ENCODE measurements at regions of chr3 and their contacts with region 1.

Region 1: GRCh38 chr3:27134165-27134796 is 234.9 kb downstream of the NEK10 start:
- H3K4me3 Mint-ChIP-seq: no peak overlapping the region
- H3K27ac Mint-ChIP-seq: no peak overlapping the region
- H3K4me1 Mint-ChIP-seq: no peaks in the 10 kb centered on the region
- H3K27me3 Mint-ChIP-seq: peaks cover 2% of the 10 kb centered on the region

Region 2: DNA sequence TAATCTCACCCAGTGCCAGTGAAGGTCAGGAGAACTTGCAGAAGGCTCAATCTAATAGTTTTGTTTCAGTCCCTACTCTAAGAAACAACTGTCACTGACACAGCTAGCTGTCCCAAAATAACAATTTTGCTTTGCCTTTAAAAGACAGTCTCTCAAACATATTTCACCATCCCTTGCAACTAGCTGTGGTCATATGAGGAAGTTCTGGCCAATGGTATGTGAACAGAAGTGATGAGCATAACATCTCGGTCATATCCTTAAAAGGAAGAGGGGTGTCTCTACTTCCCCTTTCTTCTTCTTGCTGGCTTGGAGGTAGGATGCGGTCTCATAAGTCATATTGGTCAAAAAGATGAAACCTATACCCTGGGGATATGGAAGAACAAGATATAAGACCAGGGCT is 36.8 kb after region 1 on chr3:
- intact Hi-C with region 1: no loop called
- H3K4me3 Mint-ChIP-seq: no peak overlapping the region
- H3K27ac Mint-ChIP-seq: no peak overlapping the region
- H3K4me1 Mint-ChIP-seq: peaks cover 11% of the 10 kb centered on the region
- H3K27me3 Mint-ChIP-seq: no peaks in the 10 kb centered on the region

Region 3: GRCh38 chr3:27467545-27467944 is 333.3 kb after region 1 on chr3:
- intact Hi-C with region 1: loop called (anchors 10 kb)
- H3K4me3 Mint-ChIP-seq: no peak overlapping the region
- H3K27ac Mint-ChIP-seq: no peak overlapping the region
- H3K4me1 Mint-ChIP-seq: peaks cover 10% of the 10 kb centered on the region
- H3K27me3 Mint-ChIP-seq: no peaks in the 10 kb centered on the region

Region 4: DNA sequence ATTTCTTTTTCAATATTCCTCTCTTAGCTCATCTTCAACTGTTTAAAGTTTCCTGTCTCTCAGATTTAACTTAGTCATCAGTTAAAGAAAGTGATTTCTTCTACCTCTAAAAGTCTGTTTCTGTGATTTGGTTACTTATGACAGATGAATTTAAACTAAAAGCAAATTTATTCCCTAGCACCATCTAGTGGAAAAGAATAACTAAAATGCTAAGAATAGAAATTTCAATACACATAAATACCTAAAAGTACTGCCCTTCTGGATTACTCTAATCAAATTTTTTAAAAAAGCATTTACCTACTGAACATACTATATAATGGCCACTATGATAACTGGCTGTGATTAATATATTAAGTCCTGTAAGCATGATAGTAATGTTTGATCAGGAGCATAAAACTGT is 1200.3 kb after region 1 on chr3:
- intact Hi-C with region 1: loop called (anchors 5 kb)
- H3K4me3 Mint-ChIP-seq: no peak overlapping the region
- H3K27ac Mint-ChIP-seq: no peak overlapping the region
- H3K4me1 Mint-ChIP-seq: no peaks in the 10 kb centered on the region
- H3K27me3 Mint-ChIP-seq: no peaks in the 10 kb centered on the region